ENCODE measurements at regions of chr7 and their contacts with region 1.

Region 1: GRCh38 chr7:27235387-27236311 is 7.0 kb upstream of the EVX1 start:
- DNase-seq: peak; percentile 67
- H3K4me3 ChIP-seq: peak overlapping the region; percentile 6 to 42
- H3K27ac ChIP-seq: no peak overlapping the region
- H3K4me1 ChIP-seq: peaks cover 5% of the 10 kb centered on the region
- H3K27me3 ChIP-seq: no peaks in the 10 kb centered on the region
- CTCF ChIP-seq: peak in 2 of 3 experiments; percentile 24 to 28
- POLR2A ChIP-seq: no peak

Region 2: GRCh38 chr7:27576360-27576944 is 340.8 kb after region 1 on chr7:
- intact Hi-C with region 1: loop called (anchors 10 kb)
- DNase-seq: no peak
- H3K4me3 ChIP-seq: no peak overlapping the region
- H3K27ac ChIP-seq: no peak overlapping the region
- H3K4me1 ChIP-seq: no peaks in the 10 kb centered on the region
- H3K27me3 ChIP-seq: no peaks in the 10 kb centered on the region
- CTCF ChIP-seq: peak; percentile 24 to 73 (median 29)
- POLR2A ChIP-seq: no peak

Measured in testis (tissue), 5 donors.